ENCODE measurements at regions of chr5 and their contacts with region 1.

Region 1: DNA sequence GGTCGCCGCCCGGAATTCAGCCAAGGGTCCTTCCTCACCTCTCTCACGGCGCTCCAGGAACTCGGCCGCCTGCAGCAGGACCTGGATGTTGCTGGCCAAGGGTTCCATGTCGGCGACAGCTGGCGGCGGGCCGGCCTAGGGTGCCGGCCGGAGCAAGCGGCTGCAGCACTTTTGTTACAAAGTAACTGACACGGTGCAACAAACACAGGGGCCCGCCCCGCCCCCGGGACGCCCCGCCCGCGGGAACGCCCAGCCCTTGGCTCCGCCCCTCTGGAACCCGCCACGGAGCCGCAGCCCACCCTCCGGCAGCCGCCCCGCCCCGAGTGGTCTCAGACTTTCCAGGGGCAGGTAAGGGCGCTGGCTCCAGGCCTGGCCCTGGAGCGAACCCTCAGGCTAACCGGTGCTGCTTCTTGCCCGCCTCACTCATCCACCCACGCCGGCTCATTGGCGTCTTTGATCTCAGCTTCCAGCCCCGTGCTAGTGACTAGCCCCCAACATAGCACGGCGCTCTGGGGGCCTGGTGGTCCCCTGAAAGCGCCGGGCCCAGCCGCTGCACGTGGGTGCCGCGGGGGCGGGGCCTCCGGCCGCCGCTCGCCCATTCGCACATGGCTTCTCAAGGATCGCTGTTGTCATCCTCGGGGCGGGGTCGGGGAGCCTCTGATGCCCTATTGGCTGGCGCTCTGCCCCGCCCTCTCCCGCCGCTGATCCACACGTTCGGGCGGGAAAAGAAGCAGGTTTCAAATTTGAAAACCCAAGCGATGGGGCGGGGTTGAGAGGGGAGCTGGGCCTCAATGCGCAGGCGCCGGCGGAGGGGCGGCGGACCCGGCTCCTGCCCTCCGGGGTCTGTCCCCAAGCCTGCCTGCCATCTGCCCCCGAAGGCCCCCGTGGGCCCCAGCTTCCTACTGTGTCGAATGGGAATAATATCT is at the start of gene MXD3:
- DNase-seq: peak; percentile 94 to 97 (median 96)
- H3K4me3 ChIP-seq: peak within 1 kb of the TSS; percentile 41 to 89 (median 70)
- H3K27ac ChIP-seq: peak within 1 kb of the TSS in 1 of 2 experiments; percentile 58
- H3K4me1 ChIP-seq: peaks cover 4 to 63% (median 59%) of the 10 kb centered on the region in 4 experiments
- H3K27me3 ChIP-seq: no peaks in the 10 kb centered on the region

Region 2: DNA sequence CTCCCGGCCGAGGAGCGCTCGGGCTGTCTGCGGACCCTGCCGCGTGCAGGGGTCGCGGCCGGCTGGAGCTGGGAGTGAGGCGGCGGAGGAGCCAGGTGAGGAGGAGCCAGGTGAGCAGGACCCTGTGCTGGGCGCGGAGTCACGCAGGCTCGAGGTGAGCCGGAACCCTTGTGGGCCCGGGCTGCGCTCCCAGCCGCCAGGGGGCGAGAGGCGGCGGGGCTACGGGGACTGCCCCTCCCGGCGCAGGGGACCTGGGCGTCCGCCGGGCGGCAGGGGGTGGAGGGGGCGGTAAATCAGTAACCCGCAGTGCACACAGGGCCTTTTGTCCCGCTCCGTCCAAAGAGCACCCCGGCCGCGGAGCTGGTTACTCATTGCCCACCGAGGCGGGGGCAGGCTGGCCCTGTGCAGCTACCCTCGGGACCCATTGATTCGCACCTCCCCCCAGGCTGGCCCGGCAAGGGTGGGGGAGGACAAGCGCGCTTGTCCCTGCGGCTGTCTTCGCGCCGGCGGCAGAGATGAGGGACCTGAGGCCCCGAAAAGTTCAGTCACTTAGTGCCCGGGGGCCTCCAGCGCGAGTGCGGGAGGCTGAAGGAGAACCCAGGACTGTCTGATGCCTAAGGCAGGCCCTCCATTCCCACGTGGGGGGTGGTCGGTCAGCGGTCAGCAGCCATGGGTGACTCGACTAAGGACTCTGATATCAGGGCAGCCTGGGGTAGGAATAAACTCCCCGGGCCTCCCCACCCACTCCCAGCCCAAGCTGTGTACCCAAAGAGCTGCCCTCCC is 224.9 kb before region 1 on chr5:
- CTCF ChIA-PET with region 1: no interaction called
- POLR2A ChIA-PET with region 1: no interaction called
- DNase-seq: peak; percentile 61 to 79 (median 74)
- H3K4me3 ChIP-seq: peak overlapping the region in 6 of 7 experiments; percentile 19 to 72 (median 48)
- H3K27ac ChIP-seq: no peak overlapping the region
- H3K4me1 ChIP-seq: peaks cover 0 to 15% (median 12%) of the 10 kb centered on the region in 4 experiments
- H3K27me3 ChIP-seq: peaks cover 0 to 28% (median 9%) of the 10 kb centered on the region in 5 experiments

Region 3: GRCh38 chr5:177176175-177176711 is 135.7 kb before region 1 on chr5:
- CTCF ChIA-PET with region 1: no interaction called
- POLR2A ChIA-PET with region 1: no interaction called
- DNase-seq: no peak
- H3K4me3 ChIP-seq: no peak overlapping the region
- H3K27ac ChIP-seq: no peak overlapping the region
- H3K4me1 ChIP-seq: no peaks in the 10 kb centered on the region
- H3K27me3 ChIP-seq: no peaks in the 10 kb centered on the region

Region 4: GRCh38 chr5:177300236-177300880 is 11.6 kb before region 1 on chr5:
- CTCF ChIA-PET with region 1: interaction called, 16 read pairs
- POLR2A ChIA-PET with region 1: interaction called, 4 read pairs
- DNase-seq: peak; percentile 94 to 97 (median 96)
- H3K4me3 ChIP-seq: peak overlapping the region in 4 of 7 experiments; percentile 26 to 58 (median 46)
- H3K27ac ChIP-seq: peak overlapping the region in 1 of 2 experiments; percentile 55
- H3K4me1 ChIP-seq: peaks cover 37 to 94% (median 85%) of the 10 kb centered on the region in 4 experiments
- H3K27me3 ChIP-seq: no peaks in the 10 kb centered on the region

Region 5: GRCh38 chr5:177336112-177336511 is 24.1 kb after region 1 on chr5:
- CTCF ChIA-PET with region 1: interaction called, 162 read pairs
- POLR2A ChIA-PET with region 1: interaction called, 4 read pairs
- DNase-seq: peak; percentile 83 to 90 (median 89)
- H3K4me3 ChIP-seq: no peak overlapping the region
- H3K27ac ChIP-seq: no peak overlapping the region
- H3K4me1 ChIP-seq: peaks cover 6 to 27% (median 24%) of the 10 kb centered on the region in 4 experiments
- H3K27me3 ChIP-seq: no peaks in the 10 kb centered on the region

Region 6: GRCh38 chr5:177370488-177371119 is 58.6 kb after region 1 on chr5:
- CTCF ChIA-PET with region 1: interaction called, 12 read pairs
- POLR2A ChIA-PET with region 1: no interaction called
- DNase-seq: peak; percentile 83 to 85 (median 85)
- H3K4me3 ChIP-seq: peak overlapping the region in 1 of 7 experiments; percentile 72
- H3K27ac ChIP-seq: no peak overlapping the region
- H3K4me1 ChIP-seq: peaks cover 0 to 48% (median 41%) of the 10 kb centered on the region in 4 experiments
- H3K27me3 ChIP-seq: no peaks in the 10 kb centered on the region

Region 7: GRCh38 chr5:177509381-177509951 is 197.5 kb after region 1 on chr5 and contains the start of gene DOK3:
- CTCF ChIA-PET with region 1: interaction called, 10 read pairs
- POLR2A ChIA-PET with region 1: no interaction called
- DNase-seq: peak in 2 of 3 donors; percentile 32 to 45
- H3K4me3 ChIP-seq: peak within 1 kb of the TSS; percentile 28 to 83 (median 71)
- H3K27ac ChIP-seq: peak within 1 kb of the TSS; percentile 58 to 82
- H3K4me1 ChIP-seq: peaks cover 3 to 51% (median 47%) of the 10 kb centered on the region in 4 experiments
- H3K27me3 ChIP-seq: no peaks in the 10 kb centered on the region